ENCODE measurements at regions of chr4 and their contacts with region 1.

Region 1: DNA sequence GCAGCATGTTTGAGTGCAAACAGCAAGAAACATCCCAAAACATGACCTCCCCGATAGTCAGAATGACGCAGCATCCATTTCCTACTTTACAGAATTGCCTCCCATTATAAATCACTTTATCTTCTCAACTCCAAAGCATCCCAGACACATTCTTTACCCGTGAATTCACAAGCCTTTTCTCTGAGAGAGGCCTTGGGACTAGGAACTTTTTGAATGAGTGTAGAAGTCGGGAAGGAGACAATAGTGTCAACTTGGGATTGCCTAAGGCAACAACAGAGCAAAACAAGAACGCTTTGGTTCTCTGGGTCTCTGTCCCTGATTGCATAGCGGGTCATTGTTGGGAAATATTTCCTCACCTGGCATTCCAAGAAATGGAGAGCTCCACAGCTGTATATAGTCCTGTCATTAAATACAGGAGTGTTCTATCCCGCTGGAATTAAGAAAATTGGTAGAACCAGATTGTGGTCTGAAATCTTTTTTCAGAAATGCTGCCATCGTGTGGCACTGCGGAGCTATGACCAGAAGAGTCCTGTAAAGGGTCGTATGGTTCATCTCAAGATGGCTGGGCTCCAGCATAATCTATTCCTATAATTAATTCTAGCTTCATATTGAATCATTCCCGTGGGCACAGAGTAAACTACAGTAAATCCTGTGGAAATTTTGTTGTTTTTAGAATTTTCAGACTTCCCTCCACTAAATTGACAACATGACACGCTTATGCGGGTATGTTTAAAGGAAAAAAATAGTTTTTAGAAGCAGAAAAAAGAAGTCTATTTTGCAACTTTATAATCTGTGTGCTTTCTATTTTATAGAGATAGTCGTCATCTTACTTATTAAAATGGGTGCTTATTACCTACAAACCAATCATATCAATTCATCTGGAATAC is 2.0 kb upstream of the SPP1 start:
- H3K4me3 Mint-ChIP-seq: no peak overlapping the region
- H3K27ac Mint-ChIP-seq: no peak overlapping the region
- H3K4me1 Mint-ChIP-seq: peaks cover 7% of the 10 kb centered on the region
- H3K27me3 Mint-ChIP-seq: peaks cover 24% of the 10 kb centered on the region

Region 2: DNA sequence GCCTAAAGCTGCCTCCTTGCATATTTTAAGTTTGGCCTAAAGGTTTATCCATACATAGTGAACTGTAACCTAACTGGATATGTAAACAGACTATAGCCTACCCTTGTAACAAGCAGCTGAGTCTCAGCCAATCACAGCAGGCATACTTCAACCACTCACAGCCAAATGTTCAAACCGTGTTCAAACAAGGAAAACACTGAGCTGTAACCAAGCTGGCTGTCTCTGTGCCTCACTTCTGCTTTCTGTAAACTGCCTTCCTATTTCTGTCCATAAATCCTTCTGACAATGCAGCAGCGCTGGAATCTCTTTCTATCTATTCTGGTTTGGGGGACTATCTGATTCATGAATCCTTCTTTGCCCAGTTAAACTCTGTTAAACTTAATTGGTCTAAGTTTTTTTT is 348.8 kb before region 1 on chr4:
- intact Hi-C with region 1: no loop called
- H3K4me3 Mint-ChIP-seq: no peak overlapping the region
- H3K27ac Mint-ChIP-seq: no peak overlapping the region
- H3K4me1 Mint-ChIP-seq: no peaks in the 10 kb centered on the region
- H3K27me3 Mint-ChIP-seq: peaks cover 3% of the 10 kb centered on the region

Region 3: DNA sequence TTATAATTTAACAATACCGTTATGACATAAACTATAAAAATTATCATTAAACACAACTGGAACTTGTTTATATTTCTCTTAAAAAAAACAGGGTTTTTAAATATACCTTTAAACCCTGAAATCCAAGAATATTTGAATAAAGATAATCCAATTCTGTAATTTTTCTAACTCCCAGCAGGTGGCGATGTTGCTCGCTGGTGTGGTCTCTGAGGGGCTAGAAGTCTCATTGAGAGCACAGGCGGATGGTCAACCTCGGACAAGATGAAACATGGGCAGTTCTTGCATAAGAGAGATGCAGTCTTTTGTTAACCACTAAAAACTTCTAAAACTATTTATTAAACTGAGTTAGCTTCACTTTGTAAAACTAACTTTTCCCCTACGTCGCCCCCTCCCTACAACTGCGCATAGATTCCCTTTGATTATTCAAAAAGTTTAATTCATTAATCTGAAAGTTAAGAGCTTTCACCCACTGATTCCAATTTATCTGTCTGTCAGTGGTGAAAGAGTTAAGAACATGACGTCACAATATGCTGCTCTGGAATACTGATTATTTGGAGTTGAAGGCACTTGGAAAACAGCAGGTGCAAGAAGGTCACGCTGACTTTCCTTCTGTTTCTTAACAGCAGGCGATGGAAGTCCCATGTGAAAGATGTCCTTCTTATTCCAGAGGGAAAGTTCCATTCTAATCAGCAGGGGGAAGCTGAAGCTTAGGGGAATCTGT is 293.9 kb before region 1 on chr4:
- intact Hi-C with region 1: loop called (anchors 5 kb)
- H3K4me3 Mint-ChIP-seq: no peak overlapping the region
- H3K27ac Mint-ChIP-seq: no peak overlapping the region
- H3K4me1 Mint-ChIP-seq: no peaks in the 10 kb centered on the region
- H3K27me3 Mint-ChIP-seq: no peaks in the 10 kb centered on the region

Region 4: DNA sequence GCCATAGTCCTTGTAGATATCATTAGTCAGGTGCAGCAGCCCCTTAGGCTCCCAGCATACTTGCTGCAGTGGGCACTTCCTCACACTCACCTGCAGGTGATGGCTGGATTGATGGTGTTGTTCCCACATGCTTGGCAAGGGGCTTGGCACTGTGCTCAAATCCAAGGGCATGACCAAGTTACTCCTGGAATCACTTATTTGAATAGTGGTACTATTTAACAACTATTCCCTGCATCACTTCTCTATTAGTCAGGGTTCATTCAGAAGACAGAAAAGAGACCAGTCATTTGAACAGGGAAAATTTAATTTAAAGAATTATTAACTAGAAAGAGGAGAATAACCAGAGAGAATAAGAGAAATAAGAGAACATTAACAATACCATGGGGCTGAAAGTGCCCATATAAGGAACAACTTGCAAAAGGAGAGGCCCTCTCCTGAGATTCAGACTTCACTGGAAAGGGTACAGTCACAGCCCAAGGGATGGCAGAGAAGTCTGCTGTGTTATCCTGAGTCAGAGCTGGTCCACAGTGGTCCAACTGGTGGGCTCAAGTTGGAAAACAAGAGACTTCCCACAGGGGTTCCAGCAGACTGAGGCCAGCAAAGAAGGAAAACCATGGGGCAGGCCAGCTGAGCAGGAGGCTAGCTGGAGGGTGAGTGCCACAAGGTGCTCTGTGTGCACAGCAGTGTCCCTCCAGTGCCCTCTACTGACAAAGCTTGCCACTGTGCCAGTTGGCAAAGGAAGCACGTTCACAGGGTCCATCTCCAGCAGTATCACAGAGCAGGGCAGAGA is 11.8 kb after region 1 on chr4:
- intact Hi-C with region 1: no loop called
- H3K4me3 Mint-ChIP-seq: no peak overlapping the region
- H3K27ac Mint-ChIP-seq: no peak overlapping the region
- H3K4me1 Mint-ChIP-seq: peaks cover 5% of the 10 kb centered on the region
- H3K27me3 Mint-ChIP-seq: peaks cover 3% of the 10 kb centered on the region

Region 5: DNA sequence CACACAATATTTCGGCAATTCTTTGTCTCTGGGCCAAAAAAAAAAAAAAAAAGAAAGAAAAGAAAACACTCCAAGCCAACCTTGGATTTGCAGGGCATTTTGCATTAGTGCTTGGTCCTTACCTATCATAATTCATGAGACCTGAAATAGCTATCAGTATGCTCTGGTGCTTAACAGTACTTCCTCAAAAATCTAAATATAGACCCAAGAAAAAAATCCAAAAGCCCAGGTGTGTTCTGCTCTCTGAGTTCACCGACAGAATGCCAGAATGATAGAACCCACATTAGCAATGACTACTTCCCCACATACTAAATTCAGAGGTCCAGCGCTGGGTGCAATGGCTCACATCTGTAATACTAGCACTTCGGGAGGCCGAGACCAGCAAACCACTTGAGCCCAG is 142.1 kb after region 1 on chr4:
- intact Hi-C with region 1: no loop called
- H3K4me3 Mint-ChIP-seq: no peak overlapping the region
- H3K27ac Mint-ChIP-seq: no peak overlapping the region
- H3K4me1 Mint-ChIP-seq: no peaks in the 10 kb centered on the region
- H3K27me3 Mint-ChIP-seq: no peaks in the 10 kb centered on the region

Measured in dendritic cell treated with granulocyte-macrophage colony-stimulating factor and Interleukin-4, amounts not matched to agents 40 ng/mL and 50 ng/mL, for 4 days (primary cell).